ENCODE measurements at regions of chrX and their contacts with region 1.

Region 1: GRCh38 chrX:131841496-131842410 is 181.3 kb upstream of the STK26 start:
- DNase-seq: peak; percentile 68 to 82
- H3K4me3 ChIP-seq: no peak overlapping the region
- H3K4me1 ChIP-seq: peaks cover 23% of the 10 kb centered on the region
- H3K27me3 ChIP-seq: no peaks in the 10 kb centered on the region

Region 2: DNA sequence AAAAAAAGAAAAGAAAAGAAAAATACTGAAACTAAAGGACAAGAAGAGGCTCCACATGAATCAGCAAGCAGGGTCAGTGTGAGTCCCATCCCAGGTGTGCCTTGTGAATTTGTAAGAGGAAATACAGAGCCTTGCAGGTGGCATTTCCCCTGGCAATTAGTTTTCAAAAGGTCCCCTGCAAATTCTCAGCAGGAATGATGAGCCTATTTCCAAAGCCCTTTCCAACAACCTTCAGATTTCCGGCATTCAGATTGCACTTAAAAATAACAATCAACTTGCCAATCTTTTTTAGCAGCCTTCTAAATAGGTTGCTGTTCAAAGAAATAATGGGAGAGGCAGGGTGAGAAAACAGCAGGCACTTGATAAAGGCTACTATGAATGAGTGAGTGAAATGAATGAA is 364.3 kb before region 1 on chrX:
- in situ Hi-C with region 1: no loop called
- DNase-seq: no peak
- H3K4me3 ChIP-seq: no peak overlapping the region
- H3K4me1 ChIP-seq: no peaks in the 10 kb centered on the region
- H3K27me3 ChIP-seq: no peaks in the 10 kb centered on the region

Region 3: DNA sequence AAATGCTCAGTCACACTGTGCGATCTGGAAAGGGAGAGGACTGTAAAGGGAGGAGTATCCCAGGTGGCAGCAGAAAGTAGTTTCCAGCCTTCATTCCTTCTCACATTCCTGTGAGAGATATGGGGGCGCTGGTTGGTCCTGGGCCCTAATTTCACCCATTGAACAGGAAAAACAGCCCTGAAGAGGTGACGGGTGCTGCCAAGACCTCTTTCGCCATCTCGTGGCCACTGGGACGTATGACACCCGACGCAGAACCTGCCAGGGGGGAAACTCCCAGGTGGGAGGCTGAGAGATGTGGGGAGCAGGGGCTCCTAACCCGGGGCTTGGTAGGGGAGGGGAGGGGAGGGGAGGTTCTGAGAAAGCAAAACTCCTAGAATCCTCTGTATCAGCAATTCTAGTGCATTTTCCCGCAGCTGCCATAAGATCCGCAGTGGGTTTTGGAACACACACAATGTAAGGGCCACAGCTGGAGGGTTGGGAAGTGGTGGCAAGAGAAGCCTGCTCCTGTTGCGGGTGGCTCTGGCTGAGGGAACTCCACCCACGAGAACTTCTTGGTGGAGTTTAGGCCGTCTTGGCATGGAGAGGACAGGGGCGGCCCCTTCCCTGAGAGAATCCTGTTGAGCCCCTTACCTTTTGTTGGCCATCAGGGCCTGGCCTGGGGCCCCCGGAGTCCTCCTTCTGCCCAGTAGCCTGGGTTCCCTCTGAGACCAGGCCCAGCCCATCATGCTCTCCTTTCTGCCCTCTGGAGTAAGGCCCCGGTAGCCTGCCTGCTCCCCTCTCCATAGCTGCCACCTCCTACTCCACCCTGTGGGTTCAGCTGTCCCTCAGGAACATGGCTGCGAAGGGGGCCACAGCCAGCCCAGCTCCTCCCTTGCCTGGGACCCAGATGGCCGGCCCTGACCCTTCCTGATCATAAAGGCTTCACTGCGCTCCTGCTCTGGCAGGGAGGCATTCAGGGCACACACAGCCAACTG is 163.8 kb before region 1 on chrX:
- in situ Hi-C with region 1: loop called (anchors 5 kb)
- DNase-seq: peak; percentile 57 to 77
- H3K4me3 ChIP-seq: no peak overlapping the region
- H3K4me1 ChIP-seq: no peaks in the 10 kb centered on the region
- H3K27me3 ChIP-seq: no peaks in the 10 kb centered on the region

Region 4: DNA sequence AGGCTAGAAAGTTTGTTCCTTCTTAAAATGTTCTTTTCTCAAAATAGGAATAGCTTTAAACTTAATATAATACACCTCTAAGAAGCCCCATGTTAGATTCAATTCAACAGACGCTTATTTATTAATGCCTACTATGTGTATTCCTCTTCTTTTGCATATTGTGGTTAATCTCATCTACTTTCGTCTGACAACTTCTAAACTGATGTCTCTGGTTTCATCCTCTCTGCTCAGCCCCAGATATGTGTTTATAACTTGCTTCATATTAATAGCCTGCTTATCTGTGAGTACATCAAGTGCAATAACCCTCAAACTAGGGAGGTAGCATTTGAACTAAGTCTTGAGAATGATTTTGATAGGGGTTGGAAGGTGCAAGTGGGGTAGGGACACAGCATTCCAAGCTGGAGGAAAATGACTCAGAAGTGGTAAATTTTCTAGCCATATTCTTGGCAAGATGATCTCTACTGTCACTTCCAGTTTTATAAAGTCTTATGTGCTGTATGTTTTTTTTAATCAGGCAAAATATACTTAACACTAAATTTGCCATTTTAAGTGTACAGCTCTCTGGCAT is 218.3 kb after region 1 on chrX:
- in situ Hi-C with region 1: loop called (anchors 10 kb)
- DNase-seq: no peak
- H3K4me3 ChIP-seq: no peak overlapping the region
- H3K4me1 ChIP-seq: no peaks in the 10 kb centered on the region
- H3K27me3 ChIP-seq: no peaks in the 10 kb centered on the region

Region 5: DNA sequence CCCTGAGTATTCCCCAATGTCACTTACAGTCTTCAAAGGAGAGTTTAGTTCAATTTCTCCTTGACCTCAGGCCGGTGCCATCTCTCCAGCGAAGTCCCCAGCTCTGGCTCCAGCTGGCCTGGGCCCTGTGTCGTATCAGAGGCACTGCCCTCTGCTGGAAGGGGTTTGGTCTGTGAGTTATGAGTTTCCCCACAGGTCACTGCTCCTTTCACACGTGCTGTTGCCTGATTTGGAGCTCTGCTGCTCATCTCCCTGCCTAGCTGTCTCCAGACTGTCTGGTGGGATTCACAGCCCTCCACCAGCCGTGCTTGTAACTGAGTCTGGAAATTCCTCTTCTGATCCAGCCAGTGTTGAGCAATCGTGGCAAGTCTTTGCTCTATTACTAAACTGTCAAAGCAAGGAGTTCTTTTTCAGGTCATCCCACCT is 377.6 kb after region 1 on chrX and contains the start of gene RAP2C:
- in situ Hi-C with region 1: loop called (anchors 10 kb)
- DNase-seq: peak; percentile 83 to 88
- H3K4me3 ChIP-seq: peak within 1 kb of the TSS; percentile 88
- H3K4me1 ChIP-seq: peaks cover 18% of the 10 kb centered on the region
- H3K27me3 ChIP-seq: no peaks in the 10 kb centered on the region

Region 6: GRCh38 chrX:132452911-132453550 is 611.3 kb after region 1 on chrX:
- in situ Hi-C with region 1: no loop called
- DNase-seq: no peak
- H3K4me3 ChIP-seq: no peak overlapping the region
- H3K4me1 ChIP-seq: no peaks in the 10 kb centered on the region
- H3K27me3 ChIP-seq: no peaks in the 10 kb centered on the region

Region 7: GRCh38 chrX:132732236-132732635 is 890.5 kb after region 1 on chrX:
- in situ Hi-C with region 1: no loop called
- DNase-seq: no peak
- H3K4me3 ChIP-seq: no peak overlapping the region
- H3K4me1 ChIP-seq: no peaks in the 10 kb centered on the region
- H3K27me3 ChIP-seq: no peaks in the 10 kb centered on the region